ENCODE measurements at regions of chr10 and their contacts with region 1.

Region 1: DNA sequence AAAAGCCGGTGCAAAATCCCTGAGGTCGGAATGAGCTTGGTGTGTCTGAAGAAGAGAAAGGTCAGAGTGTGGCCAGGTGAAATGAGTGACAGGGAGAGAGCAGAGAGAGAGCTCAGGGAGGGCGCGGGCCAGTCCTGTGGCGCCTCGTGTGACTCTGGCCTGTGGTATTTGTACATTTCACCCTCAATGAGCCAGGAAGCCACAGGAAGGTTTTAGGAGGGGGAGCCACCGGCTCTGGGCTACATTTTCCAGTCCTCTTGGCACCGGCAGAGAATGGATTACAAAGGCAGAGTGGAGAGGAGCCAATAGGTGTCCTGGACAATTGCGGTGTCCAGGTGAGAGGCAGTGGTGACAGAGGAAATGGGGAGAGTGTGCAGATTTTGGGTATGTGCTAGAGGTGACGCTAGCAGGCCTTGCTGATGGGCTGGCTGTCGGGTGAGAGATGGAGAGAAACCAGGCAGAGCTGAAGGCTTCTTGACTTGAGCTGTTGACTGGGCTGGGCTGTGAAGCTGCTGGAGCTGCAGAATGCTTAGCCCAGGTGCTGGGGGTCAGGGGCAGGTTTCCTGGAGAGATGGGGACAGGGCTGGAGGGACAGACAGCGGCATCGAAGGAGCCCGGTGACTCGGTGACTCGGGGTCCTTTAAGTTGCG is 38.1 kb downstream of the COL13A1 start:
- DNase-seq: no peak
- ATAC-seq: no peak
- H3K4me3 Mint-ChIP-seq: no peak overlapping the region
- H3K27ac Mint-ChIP-seq: no peak overlapping the region
- H3K4me1 Mint-ChIP-seq: peaks cover 43% of the 10 kb centered on the region
- H3K27me3 Mint-ChIP-seq: no peaks in the 10 kb centered on the region
- CTCF ChIP-seq: no peak

Region 2: GRCh38 chr10:69800109-69800508 is 39.7 kb before region 1 on chr10:
- CTCF ChIA-PET with region 1: interaction called, 10 read pairs
- POLR2A ChIA-PET with region 1: interaction called, 8 read pairs
- DNase-seq: peak; percentile 72
- ATAC-seq: peak; percentile 58
- H3K4me3 Mint-ChIP-seq: no peak overlapping the region; the same call in 1 of the 2 replicates
- H3K27ac Mint-ChIP-seq: no peak overlapping the region
- H3K4me1 Mint-ChIP-seq: peaks cover 37% of the 10 kb centered on the region
- H3K27me3 Mint-ChIP-seq: peaks cover 74% of the 10 kb centered on the region
- CTCF ChIP-seq: peak; percentile 48; the same call in 1 of the 2 replicates

Region 3: DNA sequence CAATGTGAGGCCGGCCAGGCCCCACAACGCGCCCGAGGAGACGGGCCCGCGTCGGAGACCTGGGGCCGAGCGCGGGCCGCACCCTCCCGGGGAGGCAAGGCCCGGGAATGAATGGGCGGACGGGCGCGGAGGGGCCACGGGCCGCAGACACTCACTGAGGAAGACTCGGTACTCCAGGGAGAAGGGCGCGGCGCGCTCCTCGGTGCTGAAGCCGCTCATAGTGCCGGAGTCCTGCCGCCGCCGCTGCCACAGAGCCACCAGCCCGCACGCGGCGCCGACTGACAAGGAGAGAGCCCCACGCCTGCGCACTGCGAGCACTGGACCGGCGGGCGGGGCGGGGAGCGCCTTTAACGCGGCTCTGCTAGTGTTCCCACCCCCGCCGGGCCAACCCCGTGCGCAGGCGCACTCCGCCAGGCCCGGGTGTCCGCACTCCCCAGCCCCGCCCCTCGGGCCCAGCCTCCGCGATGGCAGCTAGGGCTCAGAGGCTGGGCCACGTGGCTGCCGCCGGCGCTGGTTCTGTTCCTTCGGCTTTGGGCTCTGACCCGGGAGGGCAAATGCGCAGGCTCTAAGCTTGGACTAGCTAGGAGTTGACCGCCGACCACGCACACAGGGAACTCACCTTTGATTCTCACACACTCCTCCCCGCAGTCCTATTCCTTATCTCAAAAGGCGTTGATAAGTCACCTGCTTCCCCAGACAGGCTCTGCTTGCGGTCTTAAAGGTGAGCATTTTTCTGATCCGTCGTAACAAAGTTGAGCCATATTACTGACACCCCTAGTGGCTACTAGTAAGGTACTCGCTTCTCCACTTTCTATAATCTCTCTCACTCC is 393.5 kb after region 1 on chr10 and contains the start of gene PPA1:
- CTCF ChIA-PET with region 1: no interaction called
- POLR2A ChIA-PET with region 1: no interaction called
- DNase-seq: peak; percentile 99
- ATAC-seq: peak; percentile 95
- H3K4me3 Mint-ChIP-seq: peak within 1 kb of the TSS; percentile 92
- H3K27ac Mint-ChIP-seq: peak within 1 kb of the TSS; percentile 73
- H3K4me1 Mint-ChIP-seq: peaks cover 8% of the 10 kb centered on the region
- H3K27me3 Mint-ChIP-seq: no peaks in the 10 kb centered on the region; the same call in 1 of the 2 replicates
- CTCF ChIP-seq: no peak
- total RNA-seq, gene PPA1: 140 to 180 TPM (median 144 TPM) in 3 replicates